Transverse colon (tissue), 4 donors: ENCODE measurements at regions of chr14 and their contacts with region 1.

Region 1: GRCh38 chr14:87271344-87271743 is 721.6 kb downstream of the GALC start:
- DNase-seq: no peak
- H3K4me3 ChIP-seq: no peak overlapping the region
- H3K27ac ChIP-seq: no peak overlapping the region
- H3K4me1 ChIP-seq: no peaks in the 10 kb centered on the region
- H3K27me3 ChIP-seq: no peaks in the 10 kb centered on the region
- CTCF ChIP-seq: no peak
- EP300 ChIP-seq: no peak
- POLR2A ChIP-seq: no peak

Region 2: DNA sequence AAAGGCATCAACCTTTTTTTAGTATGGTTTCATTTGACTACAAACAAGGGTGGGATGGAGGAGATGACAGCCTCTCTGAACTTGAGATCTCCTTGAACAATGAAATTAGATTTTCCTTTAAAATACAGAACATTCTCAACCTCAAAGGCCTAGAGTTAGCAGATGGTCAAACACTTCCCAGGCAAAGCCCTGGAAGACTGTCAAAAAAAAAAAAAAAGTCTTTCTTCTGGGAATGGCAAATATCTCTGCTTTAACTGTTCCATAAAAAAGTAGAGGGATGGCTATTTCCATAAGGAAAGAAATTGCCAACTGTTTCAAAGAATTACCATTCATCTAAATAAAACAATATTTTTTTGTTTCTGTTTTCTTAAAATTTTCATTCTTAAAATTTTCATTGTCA is 149.2 kb before region 1 on chr14:
- in situ Hi-C with region 1: no loop called
- intact Hi-C with region 1: loop called (anchors 5 kb)
- DNase-seq: no peak
- H3K4me3 ChIP-seq: no peak overlapping the region
- H3K27ac ChIP-seq: no peak overlapping the region
- H3K4me1 ChIP-seq: no peaks in the 10 kb centered on the region
- H3K27me3 ChIP-seq: no peaks in the 10 kb centered on the region
- CTCF ChIP-seq: no peak
- EP300 ChIP-seq: no peak
- POLR2A ChIP-seq: no peak